ENCODE measurements at regions of chr22 and their contacts with region 1.

Region 1: DNA sequence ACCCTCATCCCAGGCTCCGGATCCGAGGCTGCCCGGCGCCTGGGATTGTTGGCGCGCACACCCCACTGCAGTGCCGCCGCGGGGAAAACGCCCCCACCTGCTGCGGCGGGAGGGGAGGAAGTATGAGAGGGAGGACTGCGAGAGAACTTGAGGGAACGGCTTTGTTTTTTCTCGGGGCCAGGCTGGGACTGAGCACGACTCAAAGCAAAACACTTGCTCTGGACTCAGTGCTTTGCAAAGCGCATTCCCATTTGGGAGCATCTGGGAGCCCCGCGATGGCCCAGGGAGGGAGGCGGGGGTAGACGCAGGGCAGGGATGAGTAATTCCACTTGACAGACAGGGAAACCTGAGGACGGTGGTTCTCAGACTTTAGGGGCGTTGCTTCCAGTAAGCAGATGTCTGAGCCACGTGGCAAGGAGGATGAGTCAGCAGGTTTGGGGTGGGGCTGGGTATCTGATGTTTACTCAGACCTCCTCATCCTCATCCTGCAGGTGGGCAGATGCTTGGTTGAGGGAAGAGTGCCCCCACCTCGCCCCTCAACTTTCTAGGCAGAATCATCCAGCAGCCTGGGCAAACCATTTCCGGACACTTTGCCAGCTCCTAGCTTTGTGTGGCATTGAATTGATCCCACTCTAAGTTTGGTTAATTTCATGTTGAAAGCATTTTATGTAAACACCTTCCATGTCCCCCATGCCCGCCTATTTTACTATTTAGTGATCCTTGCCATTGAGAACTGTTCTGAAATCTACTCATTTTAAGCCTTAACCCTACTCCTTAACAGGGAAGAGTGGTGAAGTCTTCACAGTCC is 1.5 kb downstream of the MIAT start:
- DNase-seq: peak; percentile 48 to 91 (median 61)
- H3K4me3 ChIP-seq: peak overlapping the region; percentile 90 to 95
- H3K4me3 Mint-ChIP-seq: peak overlapping the region; percentile 91 to 97 (median 94)
- H3K27ac ChIP-seq: peak overlapping the region; percentile 58
- H3K27ac Mint-ChIP-seq: peak overlapping the region; percentile 86 to 95 (median 90)
- H3K4me1 ChIP-seq: peaks cover 29% of the 10 kb centered on the region
- H3K4me1 Mint-ChIP-seq: peaks cover 19 to 42% (median 25%) of the 10 kb centered on the region in 4 donors
- H3K27me3 ChIP-seq: no peaks in the 10 kb centered on the region
- H3K27me3 Mint-ChIP-seq: no peaks in the 10 kb centered on the region

Region 2: GRCh38 chr22:26428515-26429457 is 230.1 kb before region 1 on chr22 and contains the start of gene ASPHD2:
- CTCF ChIA-PET with region 1: no interaction called
- POLR2A ChIA-PET with region 1: no interaction called
- intact Hi-C with region 1: loop called (anchors 5 kb)
- DNase-seq: peak; percentile 81 to 86 (median 83)
- H3K4me3 ChIP-seq: peak within 1 kb of the TSS; percentile 64 to 87
- H3K4me3 Mint-ChIP-seq: peak within 1 kb of the TSS; percentile 94 to 100 (median 98)
- H3K27ac ChIP-seq: peak within 1 kb of the TSS; percentile 89
- H3K27ac Mint-ChIP-seq: peak within 1 kb of the TSS; percentile 87 to 100 (median 99)
- H3K4me1 ChIP-seq: peaks cover 25% of the 10 kb centered on the region
- H3K4me1 Mint-ChIP-seq: peaks cover 18 to 37% (median 26%) of the 10 kb centered on the region in 4 donors
- H3K27me3 ChIP-seq: no peaks in the 10 kb centered on the region
- H3K27me3 Mint-ChIP-seq: peaks cover 0 to 2% of the 10 kb centered on the region in 2 donors
- total RNA-seq, gene ASPHD2: 4.0 to 4.1 TPM

Region 3: GRCh38 chr22:26642465-26643417 is 16.1 kb before region 1 on chr22:
- CTCF ChIA-PET with region 1: no interaction called
- POLR2A ChIA-PET with region 1: interaction called, 12 read pairs
- intact Hi-C with region 1: no loop called
- DNase-seq: peak; percentile 45 to 74 (median 51)
- H3K4me3 ChIP-seq: peak overlapping the region; percentile 2 to 17
- H3K4me3 Mint-ChIP-seq: peak overlapping the region; percentile 55 to 79 (median 70)
- H3K27ac ChIP-seq: peak overlapping the region; percentile 61
- H3K27ac Mint-ChIP-seq: peak overlapping the region; percentile 90 to 97 (median 96)
- H3K4me1 ChIP-seq: peaks cover 71% of the 10 kb centered on the region
- H3K4me1 Mint-ChIP-seq: peaks cover 53 to 73% (median 64%) of the 10 kb centered on the region in 4 donors
- H3K27me3 ChIP-seq: no peaks in the 10 kb centered on the region
- H3K27me3 Mint-ChIP-seq: no peaks in the 10 kb centered on the region

Region 4: DNA sequence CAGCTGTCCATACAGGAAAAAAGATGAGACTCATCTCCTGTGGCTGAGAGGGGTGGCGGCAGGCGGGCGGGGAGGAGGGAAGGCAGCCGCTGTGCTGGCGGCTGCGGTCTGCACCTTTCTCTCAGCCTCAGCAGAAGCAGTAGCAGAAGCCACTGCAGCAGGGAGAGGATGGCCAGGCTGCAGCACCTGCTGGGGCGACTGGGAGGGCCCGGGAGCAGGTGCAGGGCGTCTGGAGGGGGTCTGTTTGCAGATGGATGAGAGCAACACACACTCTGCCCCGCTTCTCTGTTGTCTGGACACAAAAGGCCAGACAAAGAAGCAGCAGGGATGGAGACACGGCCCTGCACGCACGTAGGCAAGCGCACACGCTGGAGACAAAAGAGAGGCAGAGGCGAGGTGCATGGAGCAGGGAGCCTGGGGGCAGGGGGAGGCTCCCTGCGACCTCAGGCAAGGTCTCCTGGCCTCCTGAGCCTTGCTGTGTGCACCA is 10.8 kb before region 1 on chr22:
- CTCF ChIA-PET with region 1: no interaction called
- POLR2A ChIA-PET with region 1: interaction called, 12 read pairs
- intact Hi-C with region 1: no loop called
- DNase-seq: peak in 4 of 5 donors; percentile 37 to 63 (median 42)
- H3K4me3 ChIP-seq: peak overlapping the region in 1 of 2 donors; percentile 23
- H3K4me3 Mint-ChIP-seq: peak overlapping the region in 7 of 8 donors; percentile 21 to 74 (median 59)
- H3K27ac ChIP-seq: no peak overlapping the region
- H3K27ac Mint-ChIP-seq: peak overlapping the region; percentile 11 to 77 (median 57)
- H3K4me1 ChIP-seq: peaks cover 65% of the 10 kb centered on the region
- H3K4me1 Mint-ChIP-seq: peaks cover 46 to 70% (median 56%) of the 10 kb centered on the region in 4 donors
- H3K27me3 ChIP-seq: no peaks in the 10 kb centered on the region
- H3K27me3 Mint-ChIP-seq: no peaks in the 10 kb centered on the region

Region 5: DNA sequence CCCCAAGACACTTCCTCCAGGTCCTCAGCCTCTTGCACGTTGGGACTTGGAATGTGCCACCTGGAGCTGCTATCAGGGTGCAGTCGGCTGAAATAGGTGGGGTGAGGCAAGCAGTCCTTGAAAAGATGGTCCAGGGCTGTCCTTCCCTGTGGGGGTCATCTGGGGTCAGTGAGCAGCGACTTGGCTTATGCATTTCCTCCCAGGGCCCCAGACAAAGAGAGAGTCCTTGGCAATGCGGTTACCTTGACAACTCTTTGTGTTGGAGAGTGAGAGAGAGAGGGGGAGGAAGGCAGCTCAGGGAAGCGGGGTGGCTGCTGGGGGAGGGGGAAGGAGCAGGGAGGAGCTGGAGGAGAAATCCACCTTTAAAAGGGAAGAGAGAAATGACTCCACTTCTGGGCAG is 92.3 kb after region 1 on chr22:
- CTCF ChIA-PET with region 1: no interaction called
- POLR2A ChIA-PET with region 1: no interaction called
- intact Hi-C with region 1: no loop called
- DNase-seq: no peak
- H3K4me3 ChIP-seq: no peak overlapping the region
- H3K4me3 Mint-ChIP-seq: no peak overlapping the region
- H3K27ac ChIP-seq: no peak overlapping the region
- H3K27ac Mint-ChIP-seq: no peak overlapping the region
- H3K4me1 ChIP-seq: no peaks in the 10 kb centered on the region
- H3K4me1 Mint-ChIP-seq: peaks cover 0 to 7% (median 5%) of the 10 kb centered on the region in 4 donors
- H3K27me3 ChIP-seq: no peaks in the 10 kb centered on the region
- H3K27me3 Mint-ChIP-seq: no peaks in the 10 kb centered on the region

Region 6: DNA sequence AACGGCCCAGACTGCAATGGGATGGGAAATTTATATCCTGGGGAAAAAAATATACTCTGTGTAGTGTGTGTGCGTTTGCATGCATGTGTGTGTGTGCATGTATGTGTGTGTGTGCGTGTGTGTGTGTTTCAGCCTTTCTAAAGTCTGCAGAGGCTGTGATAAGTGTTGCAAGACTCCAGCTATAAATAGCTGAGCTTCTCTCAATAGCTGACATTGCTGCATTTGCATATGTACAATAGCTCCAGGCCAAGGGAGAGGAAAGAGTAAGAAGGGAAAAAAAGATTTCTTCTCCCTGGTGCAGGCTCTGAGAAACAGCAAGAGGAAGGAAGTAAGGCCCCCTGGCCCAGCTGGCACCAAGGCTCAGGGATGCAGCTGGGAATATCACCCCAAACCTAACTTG is 659.6 kb after region 1 on chr22:
- CTCF ChIA-PET with region 1: no interaction called
- POLR2A ChIA-PET with region 1: no interaction called
- intact Hi-C with region 1: no loop called
- DNase-seq: no peak
- H3K4me3 ChIP-seq: no peak overlapping the region
- H3K4me3 Mint-ChIP-seq: no peak overlapping the region
- H3K27ac ChIP-seq: no peak overlapping the region
- H3K27ac Mint-ChIP-seq: no peak overlapping the region
- H3K4me1 ChIP-seq: no peaks in the 10 kb centered on the region
- H3K4me1 Mint-ChIP-seq: no peaks in the 10 kb centered on the region
- H3K27me3 ChIP-seq: no peaks in the 10 kb centered on the region
- H3K27me3 Mint-ChIP-seq: peaks cover 14 to 26% of the 10 kb centered on the region in 2 donors

Measured in CD4-positive, alpha-beta memory T cell (primary cell).